Left cardiac atrium (tissue), 4 donors: ENCODE measurements at regions of chr1 and their contacts with region 1.

Region 1: GRCh38 chr1:155044812-155045690 is 6.1 kb upstream of the ADAM15 start:
- DNase-seq: peak; percentile 84
- ATAC-seq: peak; percentile 89 to 91

Region 2: DNA sequence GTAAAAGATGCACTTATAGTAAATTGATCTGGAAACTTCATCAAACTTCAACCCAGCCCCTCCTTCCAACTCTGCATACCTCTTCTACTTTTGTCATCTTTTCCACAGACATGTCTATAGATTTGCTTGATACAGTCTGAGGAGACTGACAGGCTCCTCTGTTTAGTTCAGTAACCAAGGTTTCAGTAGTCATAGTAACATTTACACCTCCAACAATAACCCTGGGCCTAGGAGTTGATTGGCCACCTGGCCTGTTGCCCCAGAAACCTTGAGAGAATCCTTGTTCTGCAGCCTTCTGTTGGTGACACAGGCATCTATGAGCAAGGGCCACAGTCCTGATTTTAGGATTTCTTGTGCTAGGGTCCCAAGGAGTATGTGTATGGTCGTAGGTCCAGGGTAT is 838.9 kb before region 1 on chr1 and contains the start of gene CFAP141:
- intact Hi-C with region 1: no loop called
- DNase-seq: no peak
- ATAC-seq: no peak
- total RNA-seq, gene CFAP141: not detected

Region 3: DNA sequence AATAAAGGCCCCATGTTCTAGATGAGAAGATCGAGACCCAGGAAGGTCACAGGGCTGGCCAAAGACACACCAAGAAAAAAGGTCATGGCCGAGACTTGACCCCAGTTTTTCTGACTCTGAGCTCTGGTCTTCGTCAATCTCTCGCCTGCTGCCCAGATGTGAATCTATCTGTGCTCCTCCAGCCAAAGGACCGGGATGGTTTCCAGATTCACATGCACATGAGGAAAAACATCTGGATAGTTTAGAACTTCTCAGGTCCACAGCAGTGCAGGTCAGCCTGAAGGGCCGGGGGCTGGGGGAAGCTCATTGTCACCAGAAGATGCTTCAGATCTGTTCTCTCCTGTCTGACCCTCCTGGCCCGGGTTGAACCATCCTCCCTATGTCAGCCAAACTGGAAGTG is 224.0 kb before region 1 on chr1:
- intact Hi-C with region 1: no loop called
- DNase-seq: no peak
- ATAC-seq: peak in 1 of 2 donors; percentile 45

Region 4: GRCh38 chr1:154906621-154907081 is 138.4 kb before region 1 on chr1:
- intact Hi-C with region 1: no loop called
- DNase-seq: no peak
- ATAC-seq: peak in 1 of 2 donors; percentile 61

Region 5: GRCh38 chr1:155084722-155085503 is 39.9 kb after region 1 on chr1:
- intact Hi-C with region 1: loop called in 1 of 2 experiments (anchors 5 kb)
- DNase-seq: peak; percentile 96
- ATAC-seq: peak; percentile 92 to 93